ENCODE measurements at regions of chr5 and their contacts with region 1.

Region 1: DNA sequence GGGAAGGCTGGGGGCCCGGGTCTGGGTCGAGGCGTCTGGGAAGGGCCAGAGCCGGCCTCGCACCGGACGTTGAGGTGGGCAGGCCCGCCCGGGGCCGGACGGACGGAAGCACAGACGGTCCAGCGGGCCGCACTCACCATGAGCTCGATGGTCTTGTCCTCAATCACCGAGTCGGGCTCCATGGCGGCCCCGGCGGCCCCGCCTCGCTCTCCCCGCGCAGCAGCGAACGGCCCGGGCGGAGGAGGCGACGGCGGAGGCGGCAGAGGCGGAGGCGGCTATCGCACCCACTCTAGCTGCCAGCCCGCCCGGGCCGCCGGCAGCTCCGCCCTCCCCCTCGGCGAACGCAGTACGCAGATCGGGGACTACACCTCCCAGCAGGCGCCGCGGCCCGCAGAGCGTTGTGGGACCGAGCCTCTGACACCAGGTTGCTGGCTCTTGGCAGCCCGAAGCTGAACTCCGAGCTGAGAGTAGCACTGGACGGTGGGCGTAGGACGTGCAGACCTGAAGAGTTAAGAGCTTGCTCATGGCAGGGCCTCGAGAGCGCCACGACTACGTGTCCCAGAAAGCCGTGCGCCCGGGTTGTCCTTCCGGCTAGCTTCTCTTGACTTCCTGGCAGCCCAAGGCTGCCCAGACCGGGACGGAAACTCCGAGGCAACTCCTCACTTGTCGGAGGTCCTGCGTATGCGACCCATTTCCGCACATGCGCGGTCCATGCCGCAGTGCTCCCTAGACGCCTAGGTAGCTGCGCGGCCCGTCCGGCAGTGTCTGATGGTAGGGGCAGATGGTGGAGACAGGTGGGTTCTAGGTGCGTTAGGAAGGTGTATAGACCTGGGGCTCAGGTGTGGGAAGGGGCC is at the start of gene FBXW11:
- DNase-seq: peak; percentile 85 to 96 (median 92)
- ATAC-seq: peak; percentile 94
- H3K4me3 ChIP-seq: peak within 1 kb of the TSS; percentile 89
- H3K4me3 Mint-ChIP-seq: peak within 1 kb of the TSS; percentile 93 to 99 (median 97)
- H3K27ac ChIP-seq: peak within 1 kb of the TSS; percentile 91
- H3K27ac Mint-ChIP-seq: peak within 1 kb of the TSS; percentile 94 to 100 (median 98)
- H3K4me1 ChIP-seq: peaks cover 33 to 36% of the 10 kb centered on the region in 2 donors
- H3K4me1 Mint-ChIP-seq: peaks cover 34 to 67% (median 56%) of the 10 kb centered on the region in 7 donors
- H3K27me3 ChIP-seq: no peaks in the 10 kb centered on the region
- H3K27me3 Mint-ChIP-seq: no peaks in the 10 kb centered on the region
- total RNA-seq, gene FBXW11: 29.1 to 40.7 (median 33.6) TPM

Region 2: DNA sequence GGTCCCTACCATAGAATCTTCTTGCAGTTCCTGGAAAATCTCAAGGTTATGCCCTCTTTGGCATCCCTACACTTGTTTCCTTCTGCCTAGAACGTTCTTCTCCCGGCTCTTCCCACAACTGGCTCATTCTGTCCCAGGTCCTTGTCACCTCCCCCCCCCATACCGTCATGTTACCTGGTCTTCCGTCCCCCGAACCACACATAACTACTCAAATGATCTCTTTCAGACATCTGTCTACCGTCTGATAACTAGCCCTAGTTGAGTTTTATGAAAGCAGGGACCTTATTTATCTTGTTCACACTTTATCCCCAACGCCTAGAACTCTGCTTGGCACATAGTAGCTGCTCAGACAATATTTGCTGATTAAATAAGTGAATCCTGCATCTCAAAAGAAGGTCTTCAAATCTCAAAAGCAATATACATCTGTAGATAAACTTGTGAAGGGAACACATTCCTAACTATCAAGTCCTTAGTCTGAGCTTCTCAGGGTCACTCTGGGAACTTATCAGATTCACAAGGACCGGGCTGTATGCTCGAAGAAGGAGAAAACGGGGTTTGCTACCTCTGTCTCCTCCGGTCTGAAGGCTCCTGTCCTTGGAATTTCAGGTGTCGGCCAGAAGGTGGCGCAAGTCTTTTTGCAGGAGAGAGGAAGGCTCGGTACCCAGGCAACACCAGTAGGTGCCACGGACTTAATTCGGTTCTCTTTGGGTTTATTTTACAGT is 1739.0 kb before region 1 on chr5:
- CTCF ChIA-PET with region 1: no interaction called
- POLR2A ChIA-PET with region 1: no interaction called
- intact Hi-C with region 1: loop called in 1 of 2 experiments (anchors 10 kb)
- DNase-seq: peak; percentile 62 to 82 (median 77)
- ATAC-seq: peak; percentile 75
- H3K4me3 ChIP-seq: no peak overlapping the region
- H3K4me3 Mint-ChIP-seq: peak overlapping the region; percentile 63 to 81 (median 73)
- H3K27ac ChIP-seq: peak overlapping the region; percentile 66
- H3K27ac Mint-ChIP-seq: peak overlapping the region; percentile 81 to 98 (median 93)
- H3K4me1 ChIP-seq: peaks cover 69 to 75% of the 10 kb centered on the region in 2 donors
- H3K4me1 Mint-ChIP-seq: peaks cover 62 to 100% (median 94%) of the 10 kb centered on the region in 7 donors
- H3K27me3 ChIP-seq: no peaks in the 10 kb centered on the region
- H3K27me3 Mint-ChIP-seq: no peaks in the 10 kb centered on the region

Region 3: GRCh38 chr5:171743436-171744076 is 263.0 kb before region 1 on chr5:
- CTCF ChIA-PET with region 1: no interaction called
- POLR2A ChIA-PET with region 1: no interaction called
- intact Hi-C with region 1: no loop called
- DNase-seq: no peak
- ATAC-seq: no peak
- H3K4me3 ChIP-seq: no peak overlapping the region
- H3K4me3 Mint-ChIP-seq: no peak overlapping the region
- H3K27ac ChIP-seq: no peak overlapping the region
- H3K27ac Mint-ChIP-seq: no peak overlapping the region
- H3K4me1 ChIP-seq: no peaks in the 10 kb centered on the region
- H3K4me1 Mint-ChIP-seq: no peaks in the 10 kb centered on the region
- H3K27me3 ChIP-seq: no peaks in the 10 kb centered on the region
- H3K27me3 Mint-ChIP-seq: peaks cover 0 to 4% (median 0%) of the 10 kb centered on the region in 5 donors

Region 4: GRCh38 chr5:171927345-171927941 is 79.1 kb before region 1 on chr5:
- CTCF ChIA-PET with region 1: no interaction called
- POLR2A ChIA-PET with region 1: no interaction called
- intact Hi-C with region 1: no loop called
- DNase-seq: no peak
- ATAC-seq: no peak
- H3K4me3 ChIP-seq: no peak overlapping the region
- H3K4me3 Mint-ChIP-seq: no peak overlapping the region
- H3K27ac ChIP-seq: no peak overlapping the region
- H3K27ac Mint-ChIP-seq: peak overlapping the region in 1 of 9 donors; percentile 31
- H3K4me1 ChIP-seq: no peaks in the 10 kb centered on the region
- H3K4me1 Mint-ChIP-seq: peaks cover 18 to 80% (median 73%) of the 10 kb centered on the region in 7 donors
- H3K27me3 ChIP-seq: no peaks in the 10 kb centered on the region
- H3K27me3 Mint-ChIP-seq: no peaks in the 10 kb centered on the region

Region 5: GRCh38 chr5:171961117-171961516 is 45.4 kb before region 1 on chr5:
- CTCF ChIA-PET with region 1: interaction called, 3 read pairs
- POLR2A ChIA-PET with region 1: interaction called, 3 read pairs
- intact Hi-C with region 1: loop called in 1 of 2 experiments (anchors 2 kb)
- DNase-seq: no peak
- ATAC-seq: no peak
- H3K4me3 ChIP-seq: no peak overlapping the region
- H3K4me3 Mint-ChIP-seq: peak overlapping the region in 2 of 10 donors; percentile 1 to 8
- H3K27ac ChIP-seq: no peak overlapping the region
- H3K27ac Mint-ChIP-seq: peak overlapping the region in 1 of 9 donors; percentile 41
- H3K4me1 ChIP-seq: peaks cover 37 to 42% of the 10 kb centered on the region in 2 donors
- H3K4me1 Mint-ChIP-seq: peaks cover 38 to 98% (median 79%) of the 10 kb centered on the region in 7 donors
- H3K27me3 ChIP-seq: no peaks in the 10 kb centered on the region
- H3K27me3 Mint-ChIP-seq: no peaks in the 10 kb centered on the region

Region 6: GRCh38 chr5:172065501-172065990 is 59.0 kb after region 1 on chr5:
- CTCF ChIA-PET with region 1: no interaction called
- POLR2A ChIA-PET with region 1: interaction called, 41 read pairs
- intact Hi-C with region 1: loop called (anchors 1 to 2 kb)
- DNase-seq: no peak
- ATAC-seq: no peak
- H3K4me3 ChIP-seq: no peak overlapping the region
- H3K4me3 Mint-ChIP-seq: peak overlapping the region; percentile 7 to 86 (median 78)
- H3K27ac ChIP-seq: peak overlapping the region; percentile 82
- H3K27ac Mint-ChIP-seq: peak overlapping the region; percentile 87 to 99 (median 96)
- H3K4me1 ChIP-seq: peaks cover 36 to 48% of the 10 kb centered on the region in 2 donors
- H3K4me1 Mint-ChIP-seq: peaks cover 53 to 85% (median 75%) of the 10 kb centered on the region in 7 donors
- H3K27me3 ChIP-seq: no peaks in the 10 kb centered on the region
- H3K27me3 Mint-ChIP-seq: no peaks in the 10 kb centered on the region

Region 7: DNA sequence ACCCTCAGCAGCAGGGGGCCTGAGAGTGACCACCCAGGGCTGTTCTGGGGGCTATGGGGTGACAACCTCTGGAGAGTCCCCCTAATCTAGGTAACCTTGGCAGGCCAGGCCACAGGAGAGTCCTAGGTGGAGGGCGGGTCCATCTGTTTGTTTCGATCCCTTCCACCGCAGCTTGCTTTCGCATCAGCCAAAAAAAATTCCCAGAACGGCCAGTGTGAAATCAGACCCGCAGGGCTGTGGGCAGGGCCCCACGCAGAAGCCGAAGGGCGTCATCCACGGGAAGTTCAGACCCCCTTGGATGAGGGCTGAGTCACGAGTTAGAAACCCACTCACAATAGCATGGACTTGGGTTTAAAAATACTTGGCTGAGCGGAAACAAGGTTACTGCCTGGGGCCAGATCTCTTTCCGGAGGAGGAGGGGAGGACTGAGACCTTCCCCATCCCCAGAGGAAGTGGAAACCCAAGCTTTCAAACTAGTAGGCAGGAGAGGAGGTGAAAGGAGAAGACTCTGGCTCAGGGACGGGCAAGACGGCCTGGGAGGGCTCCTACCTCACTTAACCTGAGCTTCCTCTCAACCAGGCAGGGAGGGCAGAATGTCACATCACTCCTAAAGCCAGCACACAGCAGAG is 172.9 kb after region 1 on chr5:
- CTCF ChIA-PET with region 1: interaction called, 5 read pairs
- POLR2A ChIA-PET with region 1: interaction called, 39 read pairs
- intact Hi-C with region 1: loop called (anchors 1 kb)
- DNase-seq: peak in 8 of 9 donors; percentile 40 to 68 (median 50)
- ATAC-seq: peak; percentile 8
- H3K4me3 ChIP-seq: peak overlapping the region; percentile 76
- H3K4me3 Mint-ChIP-seq: peak overlapping the region; percentile 78 to 99 (median 90)
- H3K27ac ChIP-seq: peak overlapping the region; percentile 92
- H3K27ac Mint-ChIP-seq: peak overlapping the region; percentile 94 to 100 (median 98)
- H3K4me1 ChIP-seq: peaks cover 86 to 87% of the 10 kb centered on the region in 2 donors
- H3K4me1 Mint-ChIP-seq: peaks cover 48 to 95% (median 84%) of the 10 kb centered on the region in 7 donors
- H3K27me3 ChIP-seq: no peaks in the 10 kb centered on the region
- H3K27me3 Mint-ChIP-seq: no peaks in the 10 kb centered on the region

Region 8: GRCh38 chr5:172777881-172778814 is 771.6 kb after region 1 on chr5:
- CTCF ChIA-PET with region 1: no interaction called
- POLR2A ChIA-PET with region 1: no interaction called
- intact Hi-C with region 1: loop called in 1 of 2 experiments (anchors 5 kb)
- DNase-seq: no peak
- ATAC-seq: peak; percentile 26
- H3K4me3 ChIP-seq: peak overlapping the region; percentile 10
- H3K4me3 Mint-ChIP-seq: peak overlapping the region in 9 of 10 donors; percentile 60 to 81 (median 64)
- H3K27ac ChIP-seq: peak overlapping the region; percentile 89
- H3K27ac Mint-ChIP-seq: peak overlapping the region; percentile 91 to 98 (median 93)
- H3K4me1 ChIP-seq: peaks cover 23 to 27% of the 10 kb centered on the region in 2 donors
- H3K4me1 Mint-ChIP-seq: peaks cover 18 to 46% (median 40%) of the 10 kb centered on the region in 7 donors
- H3K27me3 ChIP-seq: no peaks in the 10 kb centered on the region
- H3K27me3 Mint-ChIP-seq: peaks cover 0 to 3% (median 0%) of the 10 kb centered on the region in 5 donors

Region 9: GRCh38 chr5:173144200-173145176 is 1137.9 kb after region 1 on chr5 and contains the start of gene BNIP1:
- CTCF ChIA-PET with region 1: no interaction called
- POLR2A ChIA-PET with region 1: no interaction called
- intact Hi-C with region 1: loop called in 1 of 2 experiments (anchors 2 kb)
- DNase-seq: peak; percentile 92 to 99 (median 96)
- ATAC-seq: peak; percentile 94
- H3K4me3 ChIP-seq: peak within 1 kb of the TSS; percentile 100
- H3K4me3 Mint-ChIP-seq: peak within 1 kb of the TSS; percentile 93 to 99 (median 97)
- H3K27ac ChIP-seq: peak within 1 kb of the TSS; percentile 98
- H3K27ac Mint-ChIP-seq: peak within 1 kb of the TSS; percentile 96 to 99 (median 98)
- H3K4me1 ChIP-seq: no peaks in the 10 kb centered on the region
- H3K4me1 Mint-ChIP-seq: peaks cover 5 to 21% (median 16%) of the 10 kb centered on the region in 7 donors
- H3K27me3 ChIP-seq: no peaks in the 10 kb centered on the region
- H3K27me3 Mint-ChIP-seq: no peaks in the 10 kb centered on the region
- total RNA-seq, gene BNIP1: 5.5 to 23.2 (median 15.3) TPM

Measured in naive thymus-derived CD4-positive, alpha-beta T cell (primary cell).